ENCODE measurements at regions of chr12 and their contacts with region 1.

Region 1: DNA sequence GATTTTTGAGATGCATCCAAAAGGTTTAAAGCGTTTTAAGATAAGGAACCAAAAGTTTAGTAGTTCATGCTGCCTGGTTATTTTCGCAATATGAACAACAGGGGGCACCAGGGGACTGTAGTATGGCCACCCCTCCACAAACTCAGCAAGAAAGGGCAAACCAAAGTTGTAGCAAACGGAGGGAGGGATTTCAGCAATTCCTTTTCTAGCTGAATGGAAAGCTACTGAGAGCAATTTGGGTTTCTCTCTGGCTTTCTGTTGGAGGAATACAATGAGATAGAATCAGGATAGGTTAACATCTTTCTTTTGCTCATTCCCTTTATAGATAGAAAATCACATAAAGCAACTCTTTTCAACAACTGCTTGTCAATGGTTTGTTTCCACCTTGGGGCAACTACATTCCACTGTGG is 62.5 kb downstream of the DRAM1 start:
- DNase-seq: peak; percentile 75
- H3K4me3 ChIP-seq: no peak overlapping the region
- H3K4me1 ChIP-seq: peaks cover 4% of the 10 kb centered on the region; the same call in 1 of the 2 replicates
- H3K27me3 ChIP-seq: 0 out of 2 replicates have a peak, but pooled peaks cover 3% of the 10 kb centered on the region

Region 2: DNA sequence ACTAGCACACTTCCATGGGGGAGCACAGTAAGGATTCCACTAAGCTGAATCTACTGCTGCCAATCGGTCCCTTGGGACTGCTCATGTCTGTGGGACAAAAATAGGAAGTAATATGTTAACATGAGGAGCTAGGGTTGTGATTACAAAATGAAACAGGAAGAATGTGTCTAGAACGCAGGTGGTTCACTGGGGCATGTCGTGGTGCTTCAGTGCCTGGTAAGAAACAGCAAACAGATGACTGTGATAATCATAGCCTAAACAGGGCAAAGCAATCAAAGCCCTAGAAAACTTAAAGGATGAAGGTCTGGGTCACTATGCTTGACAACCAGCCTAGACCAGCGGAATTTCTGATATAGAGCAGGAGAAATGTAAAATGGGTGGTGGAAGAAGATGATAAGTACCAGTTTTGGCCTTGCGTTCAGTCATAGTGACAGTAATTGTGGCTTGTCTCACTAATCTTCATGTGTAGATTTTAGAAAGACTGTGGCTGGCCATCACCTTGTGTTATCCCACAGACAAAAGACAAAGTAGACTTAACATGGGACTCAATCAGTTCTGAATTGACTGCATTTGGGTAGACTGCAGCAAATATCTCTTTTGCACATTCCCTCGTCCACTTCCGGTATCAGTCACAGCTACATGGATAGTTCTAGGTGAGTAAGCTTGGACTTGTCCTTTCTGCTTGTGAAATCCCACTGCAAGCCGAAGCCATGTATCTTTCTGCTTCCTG is 70.6 kb after region 1 on chr12:
- in situ Hi-C with region 1: no loop called
- DNase-seq: no peak
- H3K4me3 ChIP-seq: no peak overlapping the region
- H3K4me1 ChIP-seq: no peaks in the 10 kb centered on the region
- H3K27me3 ChIP-seq: no peaks in the 10 kb centered on the region

Region 3: DNA sequence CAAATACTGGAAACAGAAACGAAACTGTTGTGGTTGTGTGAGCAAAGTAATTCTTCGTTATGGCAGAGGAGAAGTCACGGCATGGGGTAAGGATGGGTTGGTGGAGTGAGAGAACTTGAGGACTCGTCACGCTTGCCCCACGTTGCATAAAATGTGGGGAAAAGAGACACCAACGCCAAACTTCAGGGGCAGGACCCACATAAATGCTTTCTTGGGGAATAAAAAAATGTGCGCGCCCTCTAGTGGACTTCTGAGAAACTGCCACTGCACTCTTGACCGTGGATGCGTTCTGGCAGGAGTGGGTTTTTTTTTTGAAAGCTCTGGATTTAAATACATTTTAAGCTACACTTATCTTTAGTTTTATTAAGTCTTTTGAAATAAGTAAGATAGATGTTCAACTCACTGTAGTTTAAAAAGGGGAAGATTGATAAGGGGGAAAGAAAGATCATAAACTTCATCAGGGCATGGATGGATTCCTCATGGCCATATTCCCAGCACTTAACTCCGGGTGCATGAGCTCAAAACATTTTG is 544.6 kb after region 1 on chr12:
- in situ Hi-C with region 1: loop called (anchors 25 kb)
- DNase-seq: peak; percentile 4 to 56
- H3K4me3 ChIP-seq: no peak overlapping the region
- H3K4me1 ChIP-seq: no peaks in the 10 kb centered on the region
- H3K27me3 ChIP-seq: peaks cover 17% of the 10 kb centered on the region

Region 4: GRCh38 chr12:102781117-102781516 is 841.3 kb after region 1 on chr12:
- in situ Hi-C with region 1: loop called (anchors 25 kb)
- DNase-seq: no peak
- H3K4me3 ChIP-seq: no peak overlapping the region
- H3K4me1 ChIP-seq: no peaks in the 10 kb centered on the region
- H3K27me3 ChIP-seq: no peaks in the 10 kb centered on the region